ENCODE measurements at regions of chr10 and their contacts with region 1.

Region 1: DNA sequence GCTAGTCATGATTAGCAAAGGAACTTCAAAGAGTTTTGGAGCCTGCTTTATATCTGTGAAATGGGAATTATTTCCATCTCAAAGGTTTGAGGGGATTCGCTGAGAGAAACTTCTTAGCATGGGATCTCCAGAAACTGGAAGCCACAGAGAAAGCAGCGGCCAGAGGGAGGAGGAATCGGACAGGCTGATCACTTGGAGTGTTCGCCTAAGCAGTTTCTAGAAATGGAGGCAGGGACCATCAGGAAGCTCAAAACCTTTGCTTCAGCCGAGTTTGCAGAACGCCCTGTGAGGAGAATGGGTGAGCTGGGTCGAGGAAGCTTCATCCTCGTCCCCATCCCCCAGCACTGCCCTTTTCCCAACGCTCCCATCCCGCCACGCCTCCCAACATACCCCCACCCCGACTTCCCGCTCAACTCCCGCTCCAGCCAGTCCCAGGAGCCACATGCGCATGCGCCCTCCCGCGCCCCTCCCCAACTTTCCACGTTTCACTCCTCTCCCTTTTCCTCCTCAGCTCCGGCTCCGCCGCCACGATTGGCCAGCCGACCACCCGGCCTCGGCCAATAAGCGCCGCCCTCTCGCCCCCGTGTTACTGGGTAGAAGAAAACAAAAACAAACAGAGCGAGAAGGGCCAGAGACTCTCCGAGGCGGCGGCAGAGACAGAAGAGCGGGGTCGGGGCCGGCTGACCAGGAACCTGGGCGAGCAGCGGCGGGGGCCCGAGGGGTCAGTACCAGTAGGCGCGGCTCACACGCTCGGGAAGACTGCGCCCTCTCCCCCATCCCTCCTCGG is at the start of gene PDCD4:
- DNase-seq: peak; percentile 97 to 100
- H3K4me3 ChIP-seq: peak within 1 kb of the TSS; percentile 50 to 74 (median 64)
- H3K27ac ChIP-seq: peak within 1 kb of the TSS; percentile 78
- H3K4me1 ChIP-seq: peaks cover 4 to 12% (median 8%) of the 10 kb centered on the region in 4 experiments
- H3K27me3 ChIP-seq: no peaks in the 10 kb centered on the region
- CTCF ChIP-seq: no peak
- EP300 ChIP-seq: no peak
- POLR2A ChIP-seq: peak; percentile 72 to 94
- RAD21 ChIP-seq: no peak
- total RNA-seq, gene PDCD4: 22.8 and 26.8 TPM in 2 replicates

Region 2: GRCh38 chr10:110860576-110861241 is 10.8 kb before region 1 on chr10:
- CTCF ChIA-PET with region 1: interaction called, 6 read pairs
- POLR2A ChIA-PET with region 1: interaction called, 12 read pairs
- DNase-seq: peak in 1 of 2 experiments; percentile 35
- H3K4me3 ChIP-seq: no peak overlapping the region
- H3K27ac ChIP-seq: no peak overlapping the region
- H3K4me1 ChIP-seq: no peaks in the 10 kb centered on the region
- H3K27me3 ChIP-seq: no peaks in the 10 kb centered on the region
- CTCF ChIP-seq: no peak
- EP300 ChIP-seq: no peak
- POLR2A ChIP-seq: no peak
- RAD21 ChIP-seq: no peak